ENCODE measurements at regions of chr1 and their contacts with region 1.

Region 1: DNA sequence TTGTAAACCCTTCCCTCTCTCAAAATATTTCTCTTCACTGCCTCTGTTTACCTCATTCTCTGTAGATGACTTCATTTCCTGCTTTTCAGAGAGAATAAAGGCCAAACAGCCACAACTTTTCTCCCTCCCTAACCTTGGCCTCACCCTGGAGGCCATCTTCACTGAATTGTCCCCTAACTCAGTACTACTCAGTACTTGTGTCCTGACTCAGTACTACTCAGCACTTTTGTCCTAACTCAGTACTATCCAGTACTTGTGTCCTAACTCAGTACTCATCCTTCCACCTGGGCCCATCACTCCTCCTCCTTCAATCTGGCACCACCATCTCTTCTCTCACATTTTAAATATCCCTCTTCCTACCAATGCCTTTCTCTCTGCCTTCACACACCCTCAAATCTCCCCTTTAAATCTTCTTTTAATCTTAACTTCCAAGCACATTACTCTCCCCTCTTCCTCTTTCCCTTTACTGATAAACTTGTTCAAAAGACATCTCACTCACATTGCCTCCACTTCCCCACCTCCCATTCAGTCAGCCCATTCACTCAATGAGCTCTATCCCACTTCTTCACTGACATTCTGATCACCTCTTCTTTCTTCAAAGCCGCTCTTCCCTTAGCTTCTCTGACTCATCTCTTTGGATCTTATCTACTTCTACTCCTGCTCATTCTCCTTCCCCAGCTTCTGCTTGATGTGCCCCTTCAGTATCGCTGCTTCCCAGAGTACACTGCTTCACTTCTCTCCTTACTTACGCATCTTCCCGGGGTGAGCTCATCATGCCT is 121.4 kb downstream of the RNF220 start:
- DNase-seq: no peak
- H3K4me3 ChIP-seq: no peak overlapping the region
- H3K27ac ChIP-seq: no peak overlapping the region
- H3K4me1 ChIP-seq: no peaks in the 10 kb centered on the region
- H3K27me3 ChIP-seq: no peaks in the 10 kb centered on the region
- CTCF ChIP-seq: no peak
- EP300 ChIP-seq: no peak
- POLR2A ChIP-seq: no peak

Region 2: GRCh38 chr1:44437107-44437716 is 89.3 kb before region 1 on chr1:
- intact Hi-C with region 1: no loop called
- DNase-seq: no peak
- H3K4me3 ChIP-seq: no peak overlapping the region
- H3K27ac ChIP-seq: no peak overlapping the region
- H3K4me1 ChIP-seq: no peaks in the 10 kb centered on the region
- H3K27me3 ChIP-seq: no peaks in the 10 kb centered on the region
- CTCF ChIP-seq: no peak
- EP300 ChIP-seq: no peak
- POLR2A ChIP-seq: no peak

Region 3: DNA sequence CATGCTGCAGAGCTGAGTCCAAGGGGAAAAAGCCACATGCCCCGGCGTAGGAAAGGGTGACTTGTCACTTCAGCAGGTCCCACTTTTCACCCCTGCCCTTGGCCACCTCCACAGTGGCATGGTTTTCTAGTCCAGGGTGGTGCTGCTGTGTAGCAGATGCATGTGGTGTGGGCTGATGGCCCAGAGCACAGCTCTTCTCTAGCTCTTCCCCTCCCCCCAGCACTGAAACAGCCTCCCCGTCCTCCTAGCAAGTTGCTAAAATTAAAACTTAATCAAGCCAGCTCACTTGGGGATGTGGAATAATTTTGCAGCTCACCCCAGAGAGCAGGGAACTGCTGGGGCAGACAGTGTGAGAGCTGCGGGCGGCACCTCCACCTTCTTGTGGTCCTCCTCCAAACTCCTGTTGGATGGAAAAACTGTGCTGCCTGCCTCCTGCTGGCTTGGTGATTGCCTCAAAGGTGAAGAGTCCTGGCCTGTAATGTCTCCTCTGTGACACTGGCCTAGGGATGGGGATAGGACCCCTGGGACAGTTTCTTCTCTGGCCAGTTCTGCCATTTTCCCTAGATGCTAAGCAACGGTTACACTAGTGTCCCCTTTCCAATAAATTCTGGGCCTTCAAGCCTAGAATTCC is 29.8 kb before region 1 on chr1:
- intact Hi-C with region 1: loop called in 1 of 4 experiments (anchors 2 kb)
- DNase-seq: no peak
- H3K4me3 ChIP-seq: no peak overlapping the region
- H3K27ac ChIP-seq: no peak overlapping the region
- H3K4me1 ChIP-seq: no peaks in the 10 kb centered on the region
- H3K27me3 ChIP-seq: no peaks in the 10 kb centered on the region
- CTCF ChIP-seq: no peak
- EP300 ChIP-seq: no peak
- POLR2A ChIP-seq: no peak

Region 4: GRCh38 chr1:44707112-44707881 is 180.8 kb after region 1 on chr1:
- intact Hi-C with region 1: no loop called
- DNase-seq: no peak
- H3K4me3 ChIP-seq: no peak overlapping the region
- H3K27ac ChIP-seq: no peak overlapping the region
- H3K4me1 ChIP-seq: no peaks in the 10 kb centered on the region
- H3K27me3 ChIP-seq: no peaks in the 10 kb centered on the region
- CTCF ChIP-seq: no peak
- EP300 ChIP-seq: no peak
- POLR2A ChIP-seq: no peak

Measured in ovary (tissue), 10 donors.